Activated CD8-positive, alpha-beta T cell treated with anti-CD3 and anti-CD28 coated beads for 36 hours (primary cell): ENCODE measurements at regions of chr14 and their contacts with region 1.

Region 1: GRCh38 chr14:66624299-66624937 is 116.5 kb downstream of the GPHN start:
- DNase-seq: peak; percentile 61
- ATAC-seq: peak; percentile 75
- H3K4me3 Mint-ChIP-seq: no peak overlapping the region
- H3K27ac Mint-ChIP-seq: no peak overlapping the region
- H3K4me1 Mint-ChIP-seq: no peaks in the 10 kb centered on the region
- H3K27me3 Mint-ChIP-seq: no peaks in the 10 kb centered on the region
- CTCF ChIP-seq: peak; percentile 51

Region 2: GRCh38 chr14:67111022-67111421 is 486.6 kb after region 1 on chr14:
- CTCF ChIA-PET with region 1: no interaction called
- POLR2A ChIA-PET with region 1: no interaction called
- intact Hi-C with region 1: loop called (anchors 10 kb)
- DNase-seq: no peak
- ATAC-seq: no peak
- H3K4me3 Mint-ChIP-seq: no peak overlapping the region
- H3K27ac Mint-ChIP-seq: no peak overlapping the region
- H3K4me1 Mint-ChIP-seq: no peaks in the 10 kb centered on the region
- H3K27me3 Mint-ChIP-seq: no peaks in the 10 kb centered on the region
- CTCF ChIP-seq: no peak